Endothelial cell of umbilical vein (primary cell): ENCODE measurements at regions of chr11 and their contacts with region 1.

Region 1: GRCh38 chr11:134050541-134051383 is 18.1 kb upstream of the JAM3 start:
- DNase-seq: peak; percentile 69
- H3K4me3 ChIP-seq: peak overlapping the region; percentile 14 to 44 (median 27)
- H3K27ac ChIP-seq: peak overlapping the region; percentile 22
- H3K4me1 ChIP-seq: no peaks in the 10 kb centered on the region
- H3K27me3 ChIP-seq: peaks cover 2 to 6% of the 10 kb centered on the region in 2 experiments
- CTCF ChIP-seq: peak; percentile 86 to 95
- POLR2A ChIP-seq: no peak

Region 2: DNA sequence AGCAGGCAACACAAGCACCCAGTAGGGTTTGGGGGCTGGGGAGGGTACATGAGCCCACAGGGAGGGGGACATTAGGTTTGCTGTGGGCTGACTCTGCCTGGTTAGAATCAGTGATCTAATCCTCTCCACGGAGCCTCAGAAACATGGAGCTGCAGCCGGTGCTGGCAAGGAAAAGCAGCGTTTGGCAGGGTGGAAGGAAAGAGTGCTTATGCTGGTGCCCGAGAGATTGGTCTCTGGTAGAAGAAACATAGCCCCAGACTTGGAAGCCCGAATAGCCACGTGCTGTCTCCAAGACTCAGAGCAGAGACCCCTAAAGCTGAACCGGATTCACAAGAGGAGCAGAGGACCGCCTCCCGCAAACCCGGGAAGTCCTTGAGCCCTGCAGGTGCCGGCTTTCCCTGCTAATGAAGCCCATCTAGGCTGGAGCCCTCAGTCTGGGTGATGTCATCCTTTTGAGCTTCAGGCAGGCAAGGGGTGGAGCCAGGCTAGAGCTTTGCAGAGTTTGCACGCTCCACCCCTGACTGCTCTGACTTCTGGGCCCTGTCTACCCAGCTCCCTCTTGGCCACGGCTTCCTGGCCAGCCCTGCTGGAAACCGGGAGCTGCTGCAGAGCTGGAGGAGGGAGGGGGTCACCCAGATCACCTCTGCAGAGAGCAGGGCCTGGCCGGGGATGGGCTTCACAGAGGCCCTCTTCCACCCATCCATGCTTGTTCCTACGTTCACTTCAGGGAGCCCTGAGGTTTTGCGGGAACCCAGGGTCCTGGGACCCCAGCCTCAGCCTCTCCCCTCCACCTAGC is 16.9 kb before region 1 on chr11:
- CTCF ChIA-PET with region 1: interaction called, 32 read pairs
- POLR2A ChIA-PET with region 1: no interaction called
- dilution Hi-C with region 1: no loop called
- intact Hi-C with region 1: no loop called
- DNase-seq: peak; percentile 75
- H3K4me3 ChIP-seq: no peak overlapping the region
- H3K27ac ChIP-seq: no peak overlapping the region
- H3K4me1 ChIP-seq: peaks cover 11% of the 10 kb centered on the region
- H3K27me3 ChIP-seq: peaks cover 0 to 3% of the 10 kb centered on the region in 2 experiments
- CTCF ChIP-seq: no peak
- POLR2A ChIP-seq: no peak

Region 3: GRCh38 chr11:134068829-134069425 is 18.2 kb after region 1 on chr11 and contains the start of gene JAM3:
- CTCF ChIA-PET with region 1: interaction called, 25 read pairs
- POLR2A ChIA-PET with region 1: no interaction called
- dilution Hi-C with region 1: no loop called
- intact Hi-C with region 1: no loop called
- DNase-seq: peak; percentile 97
- H3K4me3 ChIP-seq: peak within 1 kb of the TSS; percentile 65 to 89 (median 77)
- H3K27ac ChIP-seq: peak within 1 kb of the TSS; percentile 42
- H3K4me1 ChIP-seq: peaks cover 14% of the 10 kb centered on the region
- H3K27me3 ChIP-seq: peaks cover 2 to 8% of the 10 kb centered on the region in 2 experiments
- CTCF ChIP-seq: no peak
- POLR2A ChIP-seq: peak; percentile 91
- total RNA-seq, gene JAM3: 106 and 137 TPM in 2 replicates

Region 4: DNA sequence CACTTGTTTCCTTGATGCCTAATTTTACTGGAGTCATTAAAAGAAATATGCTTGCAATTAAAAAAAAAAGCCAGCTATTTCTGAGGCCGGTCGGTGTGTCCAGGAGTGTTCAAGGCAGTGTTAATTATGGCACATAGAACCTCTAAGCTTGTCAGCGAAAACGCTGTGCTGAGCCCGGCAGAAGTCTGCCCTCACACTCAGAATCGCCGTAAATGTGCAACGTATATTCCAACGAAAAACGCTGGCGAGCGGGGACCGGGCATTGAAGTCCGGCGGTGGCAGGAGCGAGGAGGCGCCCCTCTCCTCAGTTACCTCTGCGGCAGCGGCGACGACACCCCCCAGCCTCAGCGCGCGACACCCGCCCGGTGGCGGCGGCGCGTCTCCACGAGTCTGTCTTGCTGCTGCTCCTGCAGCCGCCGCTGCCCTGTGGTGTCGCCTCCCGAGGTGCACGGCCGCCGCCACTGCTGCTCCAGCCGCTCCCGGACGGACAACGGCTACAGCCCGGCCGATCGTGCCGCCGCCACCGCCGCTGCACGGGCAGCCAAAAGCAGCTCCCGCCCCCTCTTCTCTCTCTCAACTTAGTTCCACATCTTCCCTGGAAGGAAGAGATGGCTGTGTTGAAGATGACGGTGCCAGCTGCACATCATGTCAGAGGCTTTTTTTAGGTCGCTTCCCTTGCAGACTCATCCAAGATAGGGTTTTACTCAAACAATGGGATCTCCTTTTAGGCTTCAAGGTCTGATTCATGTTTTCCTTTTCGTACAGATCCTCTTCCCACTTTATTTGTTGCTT is 74.1 kb after region 1 on chr11:
- CTCF ChIA-PET with region 1: interaction called, 38 read pairs
- POLR2A ChIA-PET with region 1: interaction called, 4 read pairs
- dilution Hi-C with region 1: no loop called
- intact Hi-C with region 1: loop called (anchors 1 kb)
- DNase-seq: peak; percentile 67
- H3K4me3 ChIP-seq: peak overlapping the region in 2 of 3 experiments; percentile 36 to 50
- H3K27ac ChIP-seq: peak overlapping the region; percentile 68
- H3K4me1 ChIP-seq: peaks cover 60% of the 10 kb centered on the region
- H3K27me3 ChIP-seq: no peaks in the 10 kb centered on the region
- CTCF ChIP-seq: no peak
- POLR2A ChIP-seq: no peak

Region 5: GRCh38 chr11:134145715-134146114 is 95.0 kb after region 1 on chr11:
- CTCF ChIA-PET with region 1: interaction called, 80 read pairs
- POLR2A ChIA-PET with region 1: no interaction called
- dilution Hi-C with region 1: no loop called
- intact Hi-C with region 1: no loop called
- DNase-seq: no peak
- H3K4me3 ChIP-seq: no peak overlapping the region
- H3K27ac ChIP-seq: no peak overlapping the region
- H3K4me1 ChIP-seq: no peaks in the 10 kb centered on the region
- H3K27me3 ChIP-seq: no peaks in the 10 kb centered on the region
- CTCF ChIP-seq: no peak
- POLR2A ChIP-seq: no peak